ENCODE measurements at regions of chr7 and their contacts with region 1.

Region 1: GRCh38 chr7:44847508-44847920 is 373 bp downstream of the H2AZ2 start:
- DNase-seq: peak; percentile 82
- ATAC-seq: peak; percentile 78
- H3K4me3 ChIP-seq: peak overlapping the region; percentile 90
- H3K27ac ChIP-seq: peak overlapping the region; percentile 81
- H3K4me1 ChIP-seq: peaks cover 2% of the 10 kb centered on the region; the same call in 1 of the 2 replicates
- H3K27me3 ChIP-seq: no peaks in the 10 kb centered on the region
- CTCF ChIP-seq: peak; percentile 87
- POLR2A ChIP-seq: no peak
- RAD21 ChIP-seq: peak; percentile 82

Region 2: DNA sequence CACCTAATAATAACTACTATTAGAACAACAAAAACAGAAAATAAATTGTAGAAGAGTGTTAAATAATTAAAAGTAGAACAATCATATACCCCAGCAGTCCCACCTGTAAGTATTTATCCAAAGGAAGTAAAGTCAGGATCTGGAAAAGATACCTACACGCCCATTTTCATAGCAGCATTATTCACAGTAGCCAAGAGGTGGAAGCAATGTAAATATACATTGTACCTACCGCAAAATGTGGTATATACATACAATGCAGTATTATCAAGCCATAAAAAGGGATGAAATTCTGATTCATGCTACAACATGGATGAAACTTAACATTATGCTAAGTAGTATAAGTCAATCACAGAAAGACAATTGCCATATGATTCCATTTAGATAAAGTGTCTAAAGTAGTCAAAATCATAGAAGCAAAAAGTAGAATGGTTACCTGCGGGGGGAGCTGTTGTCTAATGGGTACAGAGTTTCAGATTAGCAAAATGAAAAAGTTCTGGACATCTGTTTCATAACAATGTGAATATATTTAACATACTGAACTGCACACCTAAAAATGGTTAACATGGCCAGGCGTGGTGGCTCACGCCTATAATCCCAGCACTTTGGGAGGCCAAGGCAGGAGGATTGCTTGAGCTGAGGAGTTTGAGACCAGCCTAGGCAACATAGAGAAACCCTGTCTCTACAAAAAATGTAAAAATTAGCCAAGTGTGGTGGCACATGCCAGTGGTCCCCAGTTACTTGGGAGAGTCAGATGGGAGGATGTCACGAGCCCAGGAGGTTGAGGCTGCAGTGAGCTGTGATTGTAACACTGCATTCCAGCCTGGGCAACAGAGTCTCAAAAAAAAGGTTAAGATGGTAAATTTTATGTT is 259.4 kb before region 1 on chr7:
- CTCF ChIA-PET with region 1: interaction called, 4 read pairs
- POLR2A ChIA-PET with region 1: no interaction called
- dilution Hi-C with region 1: no loop called
- in situ Hi-C with region 1: loop called (anchors 10 kb)
- intact Hi-C with region 1: loop called (anchors 1 kb)
- DNase-seq: peak; percentile 66
- ATAC-seq: peak; percentile 92
- H3K4me3 ChIP-seq: no peak overlapping the region
- H3K27ac ChIP-seq: no peak overlapping the region
- H3K4me1 ChIP-seq: peaks cover 2% of the 10 kb centered on the region; the same call in 1 of the 2 replicates
- H3K27me3 ChIP-seq: no peaks in the 10 kb centered on the region
- CTCF ChIP-seq: peak; percentile 84
- POLR2A ChIP-seq: no peak
- RAD21 ChIP-seq: peak; percentile 91

Region 3: GRCh38 chr7:44606450-44607254 is 240.9 kb before region 1 on chr7 and contains the start of gene OGDH:
- CTCF ChIA-PET with region 1: no interaction called
- POLR2A ChIA-PET with region 1: no interaction called
- dilution Hi-C with region 1: no loop called
- in situ Hi-C with region 1: no loop called
- intact Hi-C with region 1: loop called (anchors 5 kb)
- DNase-seq: peak; percentile 99
- ATAC-seq: peak; percentile 99
- H3K4me3 ChIP-seq: peak within 1 kb of the TSS; percentile 85
- H3K27ac ChIP-seq: peak within 1 kb of the TSS; percentile 85
- H3K4me1 ChIP-seq: no peaks in the 10 kb centered on the region
- H3K27me3 ChIP-seq: no peaks in the 10 kb centered on the region
- CTCF ChIP-seq: no peak
- POLR2A ChIP-seq: peak; percentile 91
- RAD21 ChIP-seq: no peak
- total RNA-seq, gene OGDH: 52.8 and 56.5 TPM in 2 replicates

Region 4: GRCh38 chr7:44797329-44798251 is 49.9 kb before region 1 on chr7:
- CTCF ChIA-PET with region 1: interaction called, 4 read pairs
- POLR2A ChIA-PET with region 1: interaction called, 3 read pairs
- dilution Hi-C with region 1: no loop called
- in situ Hi-C with region 1: no loop called
- intact Hi-C with region 1: loop called (anchors 1 kb)
- DNase-seq: peak; percentile 84
- ATAC-seq: peak; percentile 61
- H3K4me3 ChIP-seq: peak overlapping the region; percentile 91
- H3K27ac ChIP-seq: peak overlapping the region; percentile 97
- H3K4me1 ChIP-seq: peaks cover 2% of the 10 kb centered on the region; the same call in 1 of the 2 replicates
- H3K27me3 ChIP-seq: no peaks in the 10 kb centered on the region
- CTCF ChIP-seq: peak; percentile 42
- POLR2A ChIP-seq: peak; percentile 77
- RAD21 ChIP-seq: peak; percentile 38

Region 5: GRCh38 chr7:44921607-44922359 is 74.3 kb after region 1 on chr7:
- CTCF ChIA-PET with region 1: no interaction called
- POLR2A ChIA-PET with region 1: no interaction called
- dilution Hi-C with region 1: no loop called
- in situ Hi-C with region 1: no loop called
- intact Hi-C with region 1: loop called (anchors 2 kb)
- DNase-seq: peak; percentile 57
- ATAC-seq: peak; percentile 98
- H3K4me3 ChIP-seq: no peak overlapping the region
- H3K27ac ChIP-seq: no peak overlapping the region
- H3K4me1 ChIP-seq: no peaks in the 10 kb centered on the region
- H3K27me3 ChIP-seq: peaks cover under 1% of the 10 kb centered on the region
- CTCF ChIP-seq: peak; percentile 84
- POLR2A ChIP-seq: 0 out of 2 replicates have a peak, but pooled peaks have one; percentile 31
- RAD21 ChIP-seq: peak; percentile 90